ENCODE measurements at regions of chr2 and their contacts with region 1.

Region 1: DNA sequence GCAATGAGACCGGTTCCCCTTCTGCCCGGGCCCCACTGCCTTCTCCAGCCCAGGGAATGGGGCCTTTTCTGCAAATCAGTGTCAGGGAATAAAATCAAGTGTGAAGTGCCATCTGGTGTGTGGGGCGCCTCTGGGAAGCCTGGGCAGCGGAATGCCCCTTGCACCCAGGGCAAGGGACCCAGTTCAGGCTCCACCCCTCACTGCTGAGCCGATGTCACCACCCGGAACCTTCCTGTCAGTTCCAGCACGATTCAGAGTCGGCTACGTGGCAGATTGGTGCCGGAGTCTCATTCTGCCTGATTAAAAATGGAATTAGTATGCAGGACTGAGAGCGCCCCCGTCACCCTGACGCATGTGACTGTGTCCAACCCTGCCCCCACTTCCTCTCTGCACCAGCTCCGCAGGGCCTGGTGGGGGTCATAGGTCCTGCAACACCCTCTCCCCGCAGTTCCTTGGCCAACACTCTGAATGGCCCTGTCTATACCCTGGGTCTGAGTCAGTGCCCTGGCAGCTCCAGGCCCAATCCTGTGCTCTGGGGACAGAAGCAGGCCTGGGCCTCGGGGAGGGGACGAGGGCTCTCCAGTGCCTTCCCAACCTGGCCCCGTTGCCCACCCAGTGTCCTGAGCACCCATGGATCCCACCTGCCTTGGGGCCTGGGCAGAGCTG is 8.2 kb upstream of the ALPI start:
- DNase-seq: peak in 32 of 42 donors; percentile 21 to 76 (median 49)

Region 2: GRCh38 chr2:232521959-232522622 is 74.3 kb after region 1 on chr2:
- intact Hi-C with region 1: loop called (anchors 2 kb)
- DNase-seq: peak in 40 of 42 donors; percentile 35 to 88 (median 70)

Region 3: DNA sequence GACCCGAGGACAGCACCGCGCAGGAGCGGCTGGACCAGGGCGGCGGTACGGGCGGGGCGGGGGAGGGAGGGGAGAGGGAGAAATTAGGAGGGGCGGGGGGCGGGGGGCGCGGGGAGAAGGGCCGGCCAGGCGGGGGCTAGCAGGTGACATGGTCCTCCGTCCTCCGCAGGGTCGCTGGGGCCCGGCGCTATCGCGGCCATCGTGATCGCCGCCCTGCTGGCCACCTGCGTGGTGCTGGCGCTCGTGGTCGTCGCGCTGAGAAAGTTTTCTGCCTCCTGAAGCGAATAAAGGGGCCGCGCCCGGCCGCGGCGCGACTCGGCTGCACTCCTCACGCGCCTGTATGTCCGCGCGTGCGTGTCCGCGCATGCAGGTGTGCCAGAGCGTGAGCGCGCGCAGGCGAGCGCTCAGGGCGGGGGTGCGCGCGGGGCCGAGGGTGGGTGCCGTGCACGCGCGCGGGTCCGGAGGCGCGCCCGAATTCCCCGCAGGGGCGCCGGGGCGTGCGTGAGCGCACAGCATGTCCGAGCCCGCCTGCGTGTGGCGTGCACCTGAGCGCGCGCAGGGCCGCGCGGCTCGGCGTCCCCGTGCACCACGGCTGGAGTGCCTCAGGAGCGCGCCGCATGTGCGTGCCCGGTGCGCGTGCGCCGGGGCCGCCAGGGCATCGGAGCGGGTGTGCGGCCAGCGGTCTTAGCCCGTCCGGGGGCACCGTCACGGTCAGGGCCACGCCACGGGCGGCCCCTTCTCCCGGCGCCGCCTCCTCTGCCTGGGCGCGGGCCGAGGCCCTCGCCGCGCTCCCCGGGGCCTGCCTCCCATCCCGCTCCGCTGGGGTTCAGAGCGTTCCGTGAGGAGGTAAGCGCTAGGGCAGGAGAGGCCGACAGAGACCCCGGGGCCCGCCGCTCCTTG is 428.6 kb after region 1 on chr2:
- intact Hi-C with region 1: no loop called
- DNase-seq: peak in 36 of 42 donors; percentile 51 to 84 (median 69)